H1 (cell line): ENCODE measurements at regions of chr1 and their contacts with region 1.

Region 1: DNA sequence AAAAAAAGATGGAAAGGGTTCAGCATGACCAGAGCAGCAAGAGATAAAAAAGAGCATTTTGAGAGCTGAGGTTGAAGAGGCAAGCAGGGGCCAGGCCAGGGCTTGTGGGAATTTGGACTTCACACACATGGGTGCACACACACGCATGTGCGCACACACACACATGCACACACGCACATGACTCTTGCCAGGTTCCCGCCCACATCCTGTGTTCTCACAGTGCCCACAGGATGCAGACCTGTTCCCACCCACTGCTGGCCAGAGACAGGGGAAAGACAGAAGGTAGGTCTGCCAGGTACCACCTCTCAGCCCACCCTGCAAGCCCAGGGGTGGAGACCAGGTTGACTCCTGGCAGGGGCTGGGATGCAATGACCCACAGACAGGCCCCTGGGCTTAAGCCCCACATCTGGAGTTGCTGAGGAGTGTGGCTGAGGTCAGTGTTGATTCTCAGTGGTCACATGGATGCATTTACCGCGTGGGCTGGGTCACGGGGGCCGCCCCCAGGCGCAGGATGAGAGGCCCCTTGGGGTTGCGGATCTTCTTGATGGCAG is 4.4 kb downstream of the COL16A1 start:
- DNase-seq: no peak
- H3K4me3 ChIP-seq: no peak overlapping the region
- H3K27ac ChIP-seq: no peak overlapping the region
- H3K4me1 ChIP-seq: peaks cover 4 to 13% (median 5%) of the 10 kb centered on the region in 4 experiments
- H3K27me3 ChIP-seq: no peaks in the 10 kb centered on the region
- CTCF ChIP-seq: no peak
- EP300 ChIP-seq: no peak
- POLR2A ChIP-seq: no peak
- RAD21 ChIP-seq: no peak

Region 2: DNA sequence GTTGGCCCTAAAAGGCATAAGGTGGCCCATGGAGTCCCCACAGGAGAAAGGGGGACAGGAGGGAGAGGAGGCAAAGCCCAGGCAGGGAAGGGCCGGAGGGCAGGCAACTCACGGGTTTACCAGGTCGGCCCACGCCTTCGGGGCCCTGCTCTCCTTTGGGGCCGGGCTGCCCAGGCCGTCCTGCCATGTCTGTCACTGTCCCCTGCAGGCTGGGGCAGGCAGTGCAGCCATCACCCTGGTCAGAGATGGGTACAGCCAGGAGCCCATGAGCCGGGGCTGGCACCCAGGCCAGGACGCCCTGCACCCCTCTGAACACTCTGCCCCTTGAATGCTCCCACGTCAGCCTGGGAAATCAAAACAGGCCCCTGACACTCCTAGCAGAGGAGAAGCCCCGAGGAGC is 15.4 kb before region 1 on chr1:
- CTCF ChIA-PET with region 1: interaction called, 48 read pairs
- POLR2A ChIA-PET with region 1: interaction called, 3 read pairs
- DNase-seq: peak in 1 of 2 experiments; percentile 82
- H3K4me3 ChIP-seq: no peak overlapping the region
- H3K27ac ChIP-seq: no peak overlapping the region
- H3K4me1 ChIP-seq: peaks cover 0 to 1% (median 0%) of the 10 kb centered on the region in 4 experiments; a peak in 2 of 7 replicates
- H3K27me3 ChIP-seq: no peaks in the 10 kb centered on the region
- CTCF ChIP-seq: peak; percentile 72 to 93 (median 84)
- EP300 ChIP-seq: no peak
- POLR2A ChIP-seq: no peak
- RAD21 ChIP-seq: peak; percentile 57 to 66